ENCODE measurements at regions of chr22 and their contacts with region 1.

Region 1: GRCh38 chr22:37566903-37567820 is 6.9 kb downstream of the CDC42EP1 start:
- DNase-seq: peak; percentile 91
- ATAC-seq: peak; percentile 93
- H3K4me3 ChIP-seq: peak overlapping the region in 2 of 5 experiments; percentile 4 to 40
- H3K4me3 Mint-ChIP-seq: peak overlapping the region; percentile 74
- H3K27ac ChIP-seq: peak overlapping the region; percentile 25 to 44
- H3K27ac Mint-ChIP-seq: peak overlapping the region; percentile 68
- H3K4me1 ChIP-seq: peaks cover 22 to 27% of the 10 kb centered on the region in 2 donors
- H3K4me1 Mint-ChIP-seq: peaks cover 22% of the 10 kb centered on the region
- H3K27me3 ChIP-seq: peaks cover 0 to 22% (median 8%) of the 10 kb centered on the region in 4 experiments
- H3K27me3 Mint-ChIP-seq: peaks cover 30% of the 10 kb centered on the region
- CTCF ChIP-seq: peak; percentile 95

Region 2: GRCh38 chr22:36856121-36856791 is 710.9 kb before region 1 on chr22:
- CTCF ChIA-PET with region 1: no interaction called
- POLR2A ChIA-PET with region 1: no interaction called
- intact Hi-C with region 1: no loop called
- DNase-seq: peak; percentile 92
- ATAC-seq: peak; percentile 44
- H3K4me3 ChIP-seq: no peak overlapping the region
- H3K4me3 Mint-ChIP-seq: peak overlapping the region; percentile 66
- H3K27ac ChIP-seq: no peak overlapping the region
- H3K27ac Mint-ChIP-seq: peak overlapping the region; percentile 78
- H3K4me1 ChIP-seq: peaks cover 28 to 41% of the 10 kb centered on the region in 2 donors
- H3K4me1 Mint-ChIP-seq: peaks cover 39% of the 10 kb centered on the region
- H3K27me3 ChIP-seq: no peaks in the 10 kb centered on the region
- H3K27me3 Mint-ChIP-seq: no peaks in the 10 kb centered on the region
- CTCF ChIP-seq: peak; percentile 100

Region 3: GRCh38 chr22:37267135-37267587 is 300.0 kb before region 1 on chr22:
- CTCF ChIA-PET with region 1: interaction called, 5 read pairs
- POLR2A ChIA-PET with region 1: no interaction called
- intact Hi-C with region 1: loop called (anchors 1 kb)
- DNase-seq: peak; percentile 82
- ATAC-seq: peak; percentile 98
- H3K4me3 ChIP-seq: peak overlapping the region; percentile 63 to 93 (median 67)
- H3K4me3 Mint-ChIP-seq: peak overlapping the region; percentile 93
- H3K27ac ChIP-seq: peak overlapping the region; percentile 69 to 79
- H3K27ac Mint-ChIP-seq: peak overlapping the region; percentile 97
- H3K4me1 ChIP-seq: peaks cover 21 to 28% of the 10 kb centered on the region in 2 donors
- H3K4me1 Mint-ChIP-seq: peaks cover 33% of the 10 kb centered on the region
- H3K27me3 ChIP-seq: no peaks in the 10 kb centered on the region
- H3K27me3 Mint-ChIP-seq: no peaks in the 10 kb centered on the region
- CTCF ChIP-seq: peak; percentile 96

Region 4: DNA sequence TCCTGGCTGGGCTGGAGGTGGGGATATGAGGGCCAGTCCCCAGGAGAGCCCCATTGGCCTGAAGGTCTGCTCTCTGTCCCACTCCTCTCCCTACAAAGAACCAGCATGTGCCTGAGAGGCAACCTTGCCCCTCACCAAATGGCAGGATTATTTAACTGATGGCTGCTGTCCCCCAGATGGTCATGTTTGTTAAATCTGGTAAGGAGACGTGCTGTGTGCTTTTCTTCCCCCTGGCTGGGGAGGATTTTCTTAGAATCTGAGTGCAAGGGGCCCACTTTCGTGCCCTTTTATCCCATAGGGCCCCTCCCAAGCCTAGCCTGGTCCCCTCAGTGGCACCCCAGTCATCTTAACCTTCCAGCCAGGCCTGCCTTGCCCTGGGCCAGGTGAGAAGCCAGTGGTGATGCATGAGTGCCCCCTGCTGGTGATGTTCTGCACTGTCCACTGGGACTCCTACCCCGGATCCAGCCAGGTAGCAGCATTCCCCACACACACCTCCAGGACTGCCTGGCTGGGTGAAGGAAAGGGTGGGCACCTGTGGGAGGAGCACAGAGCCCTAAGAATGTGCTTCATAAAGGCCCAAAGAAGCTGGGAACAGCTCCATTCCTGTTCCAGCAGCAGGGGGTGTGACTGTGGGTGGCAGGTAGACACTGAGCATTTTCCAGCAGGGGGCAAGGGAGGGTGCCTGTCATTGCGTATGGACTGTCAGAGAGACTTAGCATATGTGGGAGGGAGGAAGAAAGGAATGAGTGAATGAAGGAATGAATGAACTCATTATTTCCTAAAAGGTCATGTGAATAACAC is 109.9 kb before region 1 on chr22:
- CTCF ChIA-PET with region 1: interaction called, 10 read pairs
- POLR2A ChIA-PET with region 1: no interaction called
- intact Hi-C with region 1: no loop called
- DNase-seq: peak; percentile 82
- ATAC-seq: peak; percentile 95
- H3K4me3 ChIP-seq: no peak overlapping the region
- H3K4me3 Mint-ChIP-seq: no peak overlapping the region
- H3K27ac ChIP-seq: no peak overlapping the region
- H3K27ac Mint-ChIP-seq: no peak overlapping the region
- H3K4me1 ChIP-seq: no peaks in the 10 kb centered on the region
- H3K4me1 Mint-ChIP-seq: peaks cover 1% of the 10 kb centered on the region
- H3K27me3 ChIP-seq: no peaks in the 10 kb centered on the region
- H3K27me3 Mint-ChIP-seq: no peaks in the 10 kb centered on the region
- CTCF ChIP-seq: peak; percentile 97

Region 5: DNA sequence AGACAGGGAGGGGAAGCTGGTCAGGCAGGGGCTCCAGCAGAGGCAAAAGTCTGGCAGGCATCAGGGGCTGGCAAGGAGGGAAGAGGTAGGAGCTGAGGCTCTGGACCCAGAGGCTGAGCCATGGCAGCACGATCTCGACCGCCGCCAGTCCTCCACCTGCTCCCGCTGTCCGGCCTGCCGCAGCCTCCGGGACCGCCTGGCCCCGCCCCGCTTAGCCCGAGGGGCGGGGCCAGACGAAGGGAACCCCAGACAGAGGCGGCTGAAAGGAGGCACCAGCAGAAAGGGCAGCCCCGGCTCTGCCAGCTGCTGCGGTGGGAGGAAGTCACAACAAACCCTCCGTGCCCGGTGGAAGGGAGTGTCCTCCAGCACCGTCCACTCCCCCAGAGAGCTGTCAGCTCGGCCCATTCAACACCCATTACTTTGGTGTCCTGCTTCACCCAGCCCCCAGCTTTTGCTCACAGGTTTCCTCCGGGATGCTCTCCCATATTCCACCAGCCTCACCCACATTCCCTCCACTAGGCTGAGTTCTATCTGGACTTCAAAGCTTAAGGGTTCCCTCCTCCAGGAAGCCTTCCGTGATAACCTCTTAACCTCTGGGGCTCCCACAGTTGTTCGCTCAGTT is 80.8 kb before region 1 on chr22 and contains the start of gene MFNG:
- CTCF ChIA-PET with region 1: interaction called, 9 read pairs
- POLR2A ChIA-PET with region 1: no interaction called
- intact Hi-C with region 1: loop called (anchors 1 kb)
- DNase-seq: peak; percentile 86
- ATAC-seq: peak; percentile 78
- H3K4me3 ChIP-seq: peak within 1 kb of the TSS; percentile 63 to 91 (median 80)
- H3K4me3 Mint-ChIP-seq: peak within 1 kb of the TSS; percentile 98
- H3K27ac ChIP-seq: peak within 1 kb of the TSS; percentile 70 to 93
- H3K27ac Mint-ChIP-seq: peak within 1 kb of the TSS; percentile 98
- H3K4me1 ChIP-seq: peaks cover 24 to 47% of the 10 kb centered on the region in 2 donors
- H3K4me1 Mint-ChIP-seq: peaks cover 55% of the 10 kb centered on the region
- H3K27me3 ChIP-seq: no peaks in the 10 kb centered on the region
- H3K27me3 Mint-ChIP-seq: no peaks in the 10 kb centered on the region
- CTCF ChIP-seq: no peak
- total RNA-seq, gene MFNG: 95.9 and 109 TPM in 2 replicates

Region 6: GRCh38 chr22:37544955-37545699 is 22.0 kb before region 1 on chr22:
- CTCF ChIA-PET with region 1: interaction called, 278 read pairs
- POLR2A ChIA-PET with region 1: interaction called, 12 read pairs
- intact Hi-C with region 1: no loop called
- DNase-seq: peak; percentile 54
- ATAC-seq: no peak
- H3K4me3 ChIP-seq: no peak overlapping the region
- H3K4me3 Mint-ChIP-seq: no peak overlapping the region
- H3K27ac ChIP-seq: no peak overlapping the region
- H3K27ac Mint-ChIP-seq: no peak overlapping the region
- H3K4me1 ChIP-seq: peaks cover 12 to 22% of the 10 kb centered on the region in 2 donors
- H3K4me1 Mint-ChIP-seq: peaks cover 12% of the 10 kb centered on the region
- H3K27me3 ChIP-seq: peaks cover 0 to 20% (median 2%) of the 10 kb centered on the region in 4 experiments
- H3K27me3 Mint-ChIP-seq: peaks cover 15% of the 10 kb centered on the region
- CTCF ChIP-seq: peak; percentile 49

Region 7: GRCh38 chr22:37581504-37581903 is 14.3 kb after region 1 on chr22:
- CTCF ChIA-PET with region 1: interaction called, 8 read pairs
- POLR2A ChIA-PET with region 1: interaction called, 12 read pairs
- intact Hi-C with region 1: no loop called
- DNase-seq: no peak
- ATAC-seq: no peak
- H3K4me3 ChIP-seq: no peak overlapping the region
- H3K4me3 Mint-ChIP-seq: no peak overlapping the region
- H3K27ac ChIP-seq: no peak overlapping the region
- H3K27ac Mint-ChIP-seq: no peak overlapping the region
- H3K4me1 ChIP-seq: peaks cover 16 to 22% of the 10 kb centered on the region in 2 donors
- H3K4me1 Mint-ChIP-seq: peaks cover 6% of the 10 kb centered on the region
- H3K27me3 ChIP-seq: peaks cover 0 to 13% (median 2%) of the 10 kb centered on the region in 4 experiments
- H3K27me3 Mint-ChIP-seq: peaks cover 29% of the 10 kb centered on the region
- CTCF ChIP-seq: no peak

Region 8: GRCh38 chr22:38069372-38070249 is 502.4 kb after region 1 on chr22:
- CTCF ChIA-PET with region 1: no interaction called
- POLR2A ChIA-PET with region 1: no interaction called
- intact Hi-C with region 1: no loop called
- DNase-seq: no peak
- ATAC-seq: no peak
- H3K4me3 ChIP-seq: no peak overlapping the region
- H3K4me3 Mint-ChIP-seq: no peak overlapping the region
- H3K27ac ChIP-seq: no peak overlapping the region
- H3K27ac Mint-ChIP-seq: no peak overlapping the region
- H3K4me1 ChIP-seq: no peaks in the 10 kb centered on the region
- H3K4me1 Mint-ChIP-seq: no peaks in the 10 kb centered on the region
- H3K27me3 ChIP-seq: no peaks in the 10 kb centered on the region
- H3K27me3 Mint-ChIP-seq: no peaks in the 10 kb centered on the region
- CTCF ChIP-seq: no peak

Measured in B cell (primary cell).